MCF 10A (cell line): ENCODE measurements at regions of chr3 and their contacts with region 1.

Region 1: DNA sequence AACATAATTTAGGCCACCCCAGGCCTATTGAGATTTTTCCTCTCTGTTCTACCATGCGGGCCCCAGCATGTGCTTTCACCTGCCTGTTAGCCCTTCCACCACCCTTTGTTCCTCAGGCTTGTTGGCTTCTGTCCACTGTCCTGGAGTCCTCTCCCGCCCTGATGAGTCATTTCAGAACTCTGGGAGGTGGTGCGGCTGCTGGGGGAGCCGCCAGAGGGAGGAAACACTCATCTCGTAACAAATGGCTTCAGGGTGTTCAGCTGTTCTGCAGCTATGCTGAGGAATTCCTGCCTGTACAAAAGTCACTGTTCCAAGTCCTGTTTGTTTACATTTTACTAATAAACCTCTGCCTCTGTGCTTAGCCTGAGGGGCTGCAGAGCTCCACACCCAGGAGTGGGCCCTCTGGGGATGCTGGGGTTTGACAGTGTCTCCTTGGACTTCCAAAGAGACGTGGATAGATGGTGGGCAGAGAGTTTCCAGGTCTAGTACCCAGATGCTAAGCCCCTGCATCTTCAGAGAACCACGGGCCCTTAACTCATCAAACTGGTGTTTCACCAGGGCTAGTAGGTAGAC is 36.2 kb downstream of the LRTM1 start:
- DNase-seq: peak; percentile 99
- H3K4me3 Mint-ChIP-seq: peak overlapping the region; percentile 51
- H3K27ac Mint-ChIP-seq: peak overlapping the region; percentile 85
- H3K4me1 Mint-ChIP-seq: peaks cover 44% of the 10 kb centered on the region
- H3K27me3 Mint-ChIP-seq: no peaks in the 10 kb centered on the region
- CTCF ChIP-seq: peak; percentile 42

Region 2: GRCh38 chr3:54703928-54704327 is 187.7 kb before region 1 on chr3:
- CTCF ChIA-PET with region 1: no interaction called
- POLR2A ChIA-PET with region 1: no interaction called
- intact Hi-C with region 1: no loop called
- DNase-seq: no peak
- H3K4me3 Mint-ChIP-seq: no peak overlapping the region
- H3K27ac Mint-ChIP-seq: no peak overlapping the region
- H3K4me1 Mint-ChIP-seq: no peaks in the 10 kb centered on the region
- H3K27me3 Mint-ChIP-seq: peaks cover 2% of the 10 kb centered on the region
- CTCF ChIP-seq: no peak

Region 3: DNA sequence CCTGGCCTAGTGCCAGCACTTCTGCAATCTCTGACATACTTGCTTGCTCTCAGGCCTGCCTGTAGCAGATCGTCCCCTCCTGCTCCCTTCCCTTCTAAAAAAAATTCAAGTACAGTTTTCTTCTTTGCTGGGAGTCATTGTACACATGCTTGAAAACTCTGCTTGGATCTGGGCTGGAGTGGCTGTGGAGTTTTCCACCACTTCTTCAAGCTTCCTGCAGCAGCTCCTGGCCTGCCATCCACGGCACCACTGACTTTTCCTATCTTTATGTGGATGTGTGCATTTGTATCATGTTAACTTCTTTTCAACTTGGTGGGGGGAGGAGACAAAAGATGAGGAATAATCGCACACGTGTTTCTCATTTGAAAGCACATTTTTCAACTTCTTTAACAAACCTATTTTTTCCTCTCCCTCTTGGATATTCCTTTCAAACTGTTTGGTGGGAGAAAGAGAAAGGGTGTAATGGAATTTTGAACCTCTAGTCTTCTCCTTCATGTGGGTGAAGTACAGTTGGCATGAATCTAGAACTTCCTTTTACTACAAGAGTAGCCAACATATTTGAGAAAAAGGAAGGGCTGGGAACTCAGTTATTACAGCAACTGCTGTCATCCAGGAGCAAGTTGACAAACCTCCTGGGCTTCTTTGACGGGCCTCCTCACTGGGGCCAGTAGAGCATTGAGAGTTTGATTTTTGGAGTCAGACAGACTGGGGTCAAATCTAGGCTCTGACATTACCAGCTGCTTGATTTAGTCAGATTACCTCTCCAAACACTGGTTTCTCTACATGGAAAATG is 97.4 kb after region 1 on chr3:
- CTCF ChIA-PET with region 1: no interaction called
- POLR2A ChIA-PET with region 1: interaction called, 6 read pairs
- intact Hi-C with region 1: loop called (anchors 10 kb)
- DNase-seq: peak; percentile 54
- H3K4me3 Mint-ChIP-seq: no peak overlapping the region
- H3K27ac Mint-ChIP-seq: no peak overlapping the region
- H3K4me1 Mint-ChIP-seq: peaks cover 21% of the 10 kb centered on the region
- H3K27me3 Mint-ChIP-seq: no peaks in the 10 kb centered on the region
- CTCF ChIP-seq: no peak

Region 4: DNA sequence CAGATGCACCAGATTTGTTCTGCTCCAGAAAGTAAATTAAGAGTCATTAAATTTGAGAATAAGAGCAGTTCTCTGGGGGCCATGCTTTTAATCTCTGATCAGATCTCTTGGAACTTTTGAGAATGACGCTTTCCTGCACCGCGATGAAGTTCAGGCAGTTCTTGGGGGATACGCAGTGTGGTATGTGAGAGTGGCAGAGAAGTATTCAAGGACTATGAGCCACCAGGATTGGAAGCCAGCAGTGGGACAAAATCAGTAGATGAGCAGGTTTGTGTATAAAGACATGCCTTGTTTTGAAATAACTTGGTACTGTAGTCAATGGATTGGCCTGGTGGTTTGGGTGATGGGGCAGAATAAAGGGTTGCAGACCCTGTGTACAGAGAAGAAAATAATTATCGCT is 1093.0 kb after region 1 on chr3:
- CTCF ChIA-PET with region 1: no interaction called
- POLR2A ChIA-PET with region 1: no interaction called
- intact Hi-C with region 1: no loop called
- DNase-seq: no peak
- H3K4me3 Mint-ChIP-seq: no peak overlapping the region
- H3K27ac Mint-ChIP-seq: no peak overlapping the region
- H3K4me1 Mint-ChIP-seq: no peaks in the 10 kb centered on the region
- H3K27me3 Mint-ChIP-seq: no peaks in the 10 kb centered on the region
- CTCF ChIP-seq: no peak